ENCODE measurements at regions of chr12 and their contacts with region 1.

Region 1: DNA sequence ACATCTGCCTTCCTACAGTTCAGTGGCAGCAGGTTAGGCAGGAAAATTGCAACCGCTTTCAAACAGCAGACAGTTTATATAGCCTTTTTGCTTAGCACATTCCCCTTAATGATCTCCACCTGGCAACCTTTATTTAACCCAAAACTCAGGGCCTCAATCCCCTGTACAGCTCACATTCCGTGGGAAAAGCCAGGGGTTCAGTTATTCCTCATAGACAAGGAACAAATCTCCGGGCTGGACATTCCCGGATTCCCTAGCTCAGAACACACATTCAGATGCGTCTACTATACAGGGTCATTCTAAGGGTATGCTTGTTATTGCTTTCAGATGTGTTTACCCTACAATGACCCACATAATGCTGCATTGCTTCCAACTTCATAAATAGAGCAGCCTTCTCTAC is 73.8 kb upstream of the DCN start:
- DNase-seq: no peak
- H3K4me3 ChIP-seq: no peak overlapping the region
- CTCF ChIP-seq: no peak
- POLR2A ChIP-seq: no peak

Region 2: GRCh38 chr12:90042920-90043641 is 1213.3 kb before region 1 on chr12:
- intact Hi-C with region 1: no loop called
- DNase-seq: no peak
- H3K4me3 ChIP-seq: no peak overlapping the region
- CTCF ChIP-seq: no peak
- POLR2A ChIP-seq: no peak

Region 3: GRCh38 chr12:91080041-91080440 is 176.4 kb before region 1 on chr12:
- intact Hi-C with region 1: loop called (anchors 5 kb)
- DNase-seq: no peak
- H3K4me3 ChIP-seq: no peak overlapping the region
- CTCF ChIP-seq: no peak
- POLR2A ChIP-seq: no peak

Measured in lower leg skin (tissue), 4 donors.